ENCODE measurements at regions of chr1 and their contacts with region 1.

Region 1: DNA sequence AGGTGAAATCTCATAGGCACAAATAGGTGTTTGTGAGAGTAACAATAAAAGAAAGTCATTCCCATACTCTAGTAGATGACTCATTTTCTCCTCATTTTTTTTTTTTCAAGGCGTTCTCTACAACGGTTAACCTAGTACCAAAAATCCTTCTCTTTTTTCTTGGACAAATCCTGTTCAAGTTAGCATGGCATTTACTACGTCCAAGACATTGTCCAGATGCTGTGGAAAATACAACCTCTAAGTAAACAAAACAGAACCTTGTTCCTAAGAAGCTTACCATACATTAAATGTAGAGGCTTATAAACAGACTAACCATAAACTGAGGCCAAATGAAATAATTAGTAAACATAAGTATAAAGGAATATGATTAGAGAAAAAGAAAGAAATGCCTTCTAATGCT is 76.2 kb upstream of the RGS4 start:
- DNase-seq: no peak
- H3K4me3 ChIP-seq: no peak overlapping the region
- H3K27ac ChIP-seq: no peak overlapping the region
- H3K4me1 ChIP-seq: peaks cover 7% of the 10 kb centered on the region
- H3K27me3 ChIP-seq: no peaks in the 10 kb centered on the region
- CTCF ChIP-seq: no peak

Region 2: DNA sequence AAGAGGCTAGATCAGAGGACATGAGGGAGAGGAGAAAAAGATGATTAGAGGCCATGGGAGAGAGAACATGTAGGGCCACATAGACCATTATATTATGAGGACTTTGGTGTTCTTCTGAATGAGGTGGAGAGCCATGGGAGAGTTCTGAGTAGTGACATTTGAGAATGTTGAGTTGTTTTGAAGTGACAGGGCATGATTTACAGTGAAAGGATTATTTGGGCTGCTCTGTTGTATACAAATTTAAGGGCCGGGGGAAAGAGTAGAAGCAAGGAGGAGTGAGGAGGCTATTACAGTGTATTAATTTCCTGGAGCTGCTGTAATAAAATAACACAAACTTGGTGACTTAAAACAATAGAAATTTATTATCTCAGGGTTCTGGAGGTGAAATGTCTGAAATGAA is 26.3 kb before region 1 on chr1:
- CTCF ChIA-PET with region 1: no interaction called
- dilution Hi-C with region 1: no loop called
- in situ Hi-C with region 1: no loop called
- intact Hi-C with region 1: no loop called
- DNase-seq: no peak
- H3K4me3 ChIP-seq: no peak overlapping the region
- H3K27ac ChIP-seq: no peak overlapping the region
- H3K4me1 ChIP-seq: no peaks in the 10 kb centered on the region
- H3K27me3 ChIP-seq: no peaks in the 10 kb centered on the region
- CTCF ChIP-seq: no peak

Region 3: DNA sequence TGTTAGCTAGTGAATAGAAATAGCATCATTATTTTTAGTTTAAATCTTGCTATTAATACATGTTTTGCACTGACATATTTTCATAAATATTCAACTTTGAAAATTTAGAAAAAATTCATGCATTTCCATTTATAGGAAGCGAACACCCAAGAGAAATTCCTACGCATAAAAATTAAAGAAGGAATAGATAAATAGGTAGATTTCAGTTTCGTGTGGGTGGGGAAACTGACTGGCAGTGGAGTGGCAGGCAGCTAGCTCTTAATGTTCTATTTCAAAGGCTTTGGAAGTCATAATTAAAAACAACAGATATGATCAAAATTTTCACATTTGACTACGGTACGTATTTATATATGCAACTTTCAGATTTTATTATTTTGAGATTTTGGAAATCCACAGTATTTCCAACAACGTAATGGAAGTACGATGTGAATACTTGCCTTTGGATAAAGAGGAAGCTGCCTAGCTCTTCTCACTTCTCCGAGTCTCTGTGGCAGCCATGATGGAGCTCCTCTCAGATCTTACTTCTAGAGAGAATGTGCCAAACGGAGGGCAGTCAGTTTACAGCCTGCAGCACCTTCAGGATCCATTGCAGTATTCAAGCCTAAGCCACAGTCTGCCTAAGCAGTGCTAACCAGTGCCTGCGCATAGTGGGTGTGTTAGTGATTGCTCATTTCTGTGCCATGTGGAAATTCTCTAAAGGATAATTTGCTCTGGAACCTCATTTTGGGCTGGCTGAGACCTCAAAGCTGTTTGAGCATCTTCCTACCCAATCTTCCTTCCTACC is 13.3 kb after region 1 on chr1:
- CTCF ChIA-PET with region 1: no interaction called
- dilution Hi-C with region 1: no loop called
- in situ Hi-C with region 1: no loop called
- intact Hi-C with region 1: loop called (anchors 1 kb)
- DNase-seq: no peak
- H3K4me3 ChIP-seq: no peak overlapping the region
- H3K27ac ChIP-seq: no peak overlapping the region
- H3K4me1 ChIP-seq: no peaks in the 10 kb centered on the region
- H3K27me3 ChIP-seq: no peaks in the 10 kb centered on the region
- CTCF ChIP-seq: no peak

Measured in mammary epithelial cell (primary cell).